Calu3 (cell line): ENCODE measurements at regions of chr14 and their contacts with region 1.

Region 1: DNA sequence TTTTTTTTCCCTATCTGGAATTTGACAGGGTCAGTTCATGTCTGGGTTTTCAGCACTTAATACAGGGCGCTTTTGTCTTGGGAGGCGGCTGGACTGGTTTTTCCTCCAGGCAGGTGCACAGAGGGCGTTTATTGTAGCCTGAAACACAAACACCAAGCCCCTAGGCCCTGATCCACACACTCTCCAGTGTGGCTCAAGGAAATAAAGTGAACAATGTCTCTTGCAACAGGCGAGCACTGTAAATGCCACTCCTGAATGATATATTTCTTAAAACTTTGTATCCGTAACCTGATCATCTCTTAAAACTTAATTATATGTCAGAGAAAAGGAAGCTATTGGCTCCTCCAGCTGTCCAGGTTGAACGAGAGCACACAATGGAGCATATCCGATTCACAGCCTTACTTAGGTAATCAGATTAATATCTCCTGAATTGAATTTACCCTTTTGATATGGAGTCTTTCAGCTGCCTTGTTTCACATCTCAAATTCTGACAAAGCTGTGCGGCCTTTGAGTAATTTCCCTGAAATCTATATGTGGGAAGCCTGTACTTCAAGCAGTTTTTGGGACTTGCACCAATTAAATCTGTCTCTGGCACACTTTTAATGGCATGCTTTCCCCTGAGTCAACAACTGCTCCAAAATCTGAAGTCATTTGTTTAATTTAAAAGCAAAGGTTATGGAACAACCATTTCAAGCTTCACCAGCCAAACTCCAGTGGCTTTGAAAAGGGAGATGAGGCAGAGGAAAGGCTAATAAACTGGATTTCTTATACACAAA is 485.7 kb downstream of the ZFP36L1 start:
- DNase-seq: peak; percentile 87
- H3K4me3 Mint-ChIP-seq: peak overlapping the region; percentile 43
- H3K27ac Mint-ChIP-seq: peak overlapping the region; percentile 98
- H3K4me1 Mint-ChIP-seq: peaks cover 40% of the 10 kb centered on the region
- H3K27me3 Mint-ChIP-seq: no peaks in the 10 kb centered on the region
- CTCF ChIP-seq: no peak

Region 2: DNA sequence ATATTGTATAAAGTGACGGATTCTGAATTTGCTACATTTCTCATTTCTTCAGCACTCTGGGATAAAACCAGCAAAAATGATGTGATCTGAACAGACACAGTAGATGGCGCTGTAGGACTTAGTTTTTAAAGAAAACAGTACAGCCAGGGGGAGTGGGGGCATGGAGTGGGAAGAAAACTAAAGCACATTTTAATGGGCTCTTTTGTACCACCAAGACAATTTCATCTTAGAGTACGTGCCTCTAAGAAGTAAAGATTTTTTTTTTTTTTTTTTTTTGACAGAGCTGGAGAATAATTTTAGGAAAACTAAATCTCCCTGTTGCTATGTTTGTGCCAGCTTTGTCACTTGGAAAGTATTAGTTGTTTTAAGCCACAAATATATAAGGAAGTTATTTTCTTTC is 363.3 kb before region 1 on chr14:
- CTCF ChIA-PET with region 1: interaction called, 4 read pairs
- intact Hi-C with region 1: loop called (anchors 2 kb)
- DNase-seq: peak; percentile 75
- H3K4me3 Mint-ChIP-seq: no peak overlapping the region
- H3K27ac Mint-ChIP-seq: peak overlapping the region; percentile 87
- H3K4me1 Mint-ChIP-seq: peaks cover 41% of the 10 kb centered on the region
- H3K27me3 Mint-ChIP-seq: no peaks in the 10 kb centered on the region
- CTCF ChIP-seq: peak; percentile 60

Region 3: GRCh38 chr14:68248481-68249255 is 58.5 kb before region 1 on chr14:
- CTCF ChIA-PET with region 1: interaction called, 3 read pairs
- intact Hi-C with region 1: loop called (anchors 2 kb)
- DNase-seq: peak; percentile 10
- H3K4me3 Mint-ChIP-seq: no peak overlapping the region
- H3K27ac Mint-ChIP-seq: peak overlapping the region; percentile 77
- H3K4me1 Mint-ChIP-seq: peaks cover 70% of the 10 kb centered on the region
- H3K27me3 Mint-ChIP-seq: no peaks in the 10 kb centered on the region
- CTCF ChIP-seq: peak; percentile 42

Region 4: GRCh38 chr14:68458840-68459469 is 151.8 kb after region 1 on chr14:
- CTCF ChIA-PET with region 1: interaction called, 11 read pairs
- intact Hi-C with region 1: no loop called
- DNase-seq: peak; percentile 45
- H3K4me3 Mint-ChIP-seq: peak overlapping the region; percentile 40
- H3K27ac Mint-ChIP-seq: peak overlapping the region; percentile 90
- H3K4me1 Mint-ChIP-seq: peaks cover 35% of the 10 kb centered on the region
- H3K27me3 Mint-ChIP-seq: no peaks in the 10 kb centered on the region
- CTCF ChIP-seq: no peak

Region 5: GRCh38 chr14:68585697-68586111 is 278.5 kb after region 1 on chr14:
- CTCF ChIA-PET with region 1: no interaction called
- intact Hi-C with region 1: loop called (anchors 2 kb)
- DNase-seq: no peak
- H3K4me3 Mint-ChIP-seq: no peak overlapping the region
- H3K27ac Mint-ChIP-seq: peak overlapping the region; percentile 42
- H3K4me1 Mint-ChIP-seq: peaks cover 25% of the 10 kb centered on the region
- H3K27me3 Mint-ChIP-seq: no peaks in the 10 kb centered on the region
- CTCF ChIP-seq: no peak

Region 6: GRCh38 chr14:68788996-68789820 is 482.0 kb after region 1 on chr14:
- CTCF ChIA-PET with region 1: interaction called, 5 read pairs
- intact Hi-C with region 1: loop called (anchors 2 kb)
- DNase-seq: peak; percentile 91
- H3K4me3 Mint-ChIP-seq: peak overlapping the region; percentile 85
- H3K27ac Mint-ChIP-seq: peak overlapping the region; percentile 81
- H3K4me1 Mint-ChIP-seq: peaks cover 27% of the 10 kb centered on the region
- H3K27me3 Mint-ChIP-seq: no peaks in the 10 kb centered on the region
- CTCF ChIP-seq: peak; percentile 49